Activated T-helper 2 cell treated with anti-CD3 and anti-CD28 coated beads, Interferon-gamma antibody, Interleukin-2, Interleukin-4, amounts not matched to agents 10 μg/mL and 5 μg/mL and 100 μg/mL, durations not matched to agents 14 hours and 24 hours and 36 hours (primary cell): ENCODE measurements at regions of chr1 and their contacts with region 1.

Region 1: GRCh38 chr1:87077959-87078639 is 163.7 kb downstream of the HS2ST1 start:
- DNase-seq: no peak
- H3K4me3 Mint-ChIP-seq: no peak overlapping the region
- H3K27ac Mint-ChIP-seq: peak overlapping the region; percentile 87
- H3K4me1 Mint-ChIP-seq: peaks cover 29% of the 10 kb centered on the region
- H3K27me3 Mint-ChIP-seq: no peaks in the 10 kb centered on the region

Region 2: GRCh38 chr1:86998727-86999126 is 79.4 kb before region 1 on chr1:
- intact Hi-C with region 1: loop called (anchors 1 kb)
- DNase-seq: no peak
- H3K4me3 Mint-ChIP-seq: no peak overlapping the region
- H3K27ac Mint-ChIP-seq: no peak overlapping the region
- H3K4me1 Mint-ChIP-seq: peaks cover 29% of the 10 kb centered on the region
- H3K27me3 Mint-ChIP-seq: no peaks in the 10 kb centered on the region

Region 3: DNA sequence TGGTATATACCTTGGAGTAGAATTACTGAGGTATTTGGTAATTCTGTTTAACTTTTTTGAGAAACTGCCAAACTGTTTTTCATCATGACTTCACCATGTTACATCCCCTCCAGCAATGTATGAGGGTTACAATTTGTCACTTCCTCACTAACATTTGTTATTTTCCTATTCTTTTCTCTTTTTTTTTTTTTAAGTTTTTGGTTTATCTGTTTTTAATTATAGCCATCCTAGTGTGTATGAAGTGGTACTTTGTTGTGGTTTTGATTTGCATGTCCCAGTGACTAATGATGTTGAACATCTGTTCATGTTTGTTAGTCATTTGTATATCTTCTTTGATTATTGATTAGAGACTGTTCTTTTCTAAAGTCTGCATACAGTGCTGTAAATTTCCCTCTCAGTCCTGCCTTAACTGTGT is 16.4 kb before region 1 on chr1:
- intact Hi-C with region 1: loop called (anchors 2 kb)
- DNase-seq: no peak
- H3K4me3 Mint-ChIP-seq: no peak overlapping the region
- H3K27ac Mint-ChIP-seq: peak overlapping the region; percentile 69
- H3K4me1 Mint-ChIP-seq: peaks cover 30% of the 10 kb centered on the region
- H3K27me3 Mint-ChIP-seq: no peaks in the 10 kb centered on the region

Region 4: DNA sequence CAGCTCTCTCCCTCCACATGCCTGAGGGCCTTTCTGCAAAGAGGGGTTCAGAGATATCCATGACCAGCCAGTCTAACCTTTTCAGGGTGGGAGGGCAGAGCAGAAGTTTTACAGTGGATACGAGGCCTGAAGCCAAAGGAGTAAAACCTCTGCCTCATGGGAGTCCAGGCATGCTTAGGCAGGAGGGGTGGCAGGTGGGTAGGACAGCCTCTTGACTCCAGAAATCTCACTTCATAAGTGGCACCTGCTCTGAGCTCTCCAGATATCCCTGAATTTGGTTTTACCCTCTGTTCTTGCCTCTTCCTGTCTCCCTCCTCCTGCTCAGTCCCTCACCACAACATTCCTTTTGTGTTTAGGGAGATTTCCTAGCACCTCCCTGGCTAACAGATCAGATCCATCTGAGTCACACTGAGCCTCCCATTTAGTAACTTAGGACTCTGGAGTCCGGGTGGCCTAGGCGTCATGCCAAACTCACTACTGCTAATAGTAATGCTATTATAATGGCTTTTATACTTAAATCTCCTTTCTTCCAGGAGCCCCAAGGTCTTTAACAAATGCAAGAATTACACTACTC is 37.3 kb after region 1 on chr1:
- intact Hi-C with region 1: no loop called
- DNase-seq: no peak
- H3K4me3 Mint-ChIP-seq: no peak overlapping the region
- H3K27ac Mint-ChIP-seq: no peak overlapping the region
- H3K4me1 Mint-ChIP-seq: peaks cover 5% of the 10 kb centered on the region
- H3K27me3 Mint-ChIP-seq: no peaks in the 10 kb centered on the region